GM13976 (cell line): ENCODE measurements at regions of chr10 and their contacts with region 1.

Region 1: DNA sequence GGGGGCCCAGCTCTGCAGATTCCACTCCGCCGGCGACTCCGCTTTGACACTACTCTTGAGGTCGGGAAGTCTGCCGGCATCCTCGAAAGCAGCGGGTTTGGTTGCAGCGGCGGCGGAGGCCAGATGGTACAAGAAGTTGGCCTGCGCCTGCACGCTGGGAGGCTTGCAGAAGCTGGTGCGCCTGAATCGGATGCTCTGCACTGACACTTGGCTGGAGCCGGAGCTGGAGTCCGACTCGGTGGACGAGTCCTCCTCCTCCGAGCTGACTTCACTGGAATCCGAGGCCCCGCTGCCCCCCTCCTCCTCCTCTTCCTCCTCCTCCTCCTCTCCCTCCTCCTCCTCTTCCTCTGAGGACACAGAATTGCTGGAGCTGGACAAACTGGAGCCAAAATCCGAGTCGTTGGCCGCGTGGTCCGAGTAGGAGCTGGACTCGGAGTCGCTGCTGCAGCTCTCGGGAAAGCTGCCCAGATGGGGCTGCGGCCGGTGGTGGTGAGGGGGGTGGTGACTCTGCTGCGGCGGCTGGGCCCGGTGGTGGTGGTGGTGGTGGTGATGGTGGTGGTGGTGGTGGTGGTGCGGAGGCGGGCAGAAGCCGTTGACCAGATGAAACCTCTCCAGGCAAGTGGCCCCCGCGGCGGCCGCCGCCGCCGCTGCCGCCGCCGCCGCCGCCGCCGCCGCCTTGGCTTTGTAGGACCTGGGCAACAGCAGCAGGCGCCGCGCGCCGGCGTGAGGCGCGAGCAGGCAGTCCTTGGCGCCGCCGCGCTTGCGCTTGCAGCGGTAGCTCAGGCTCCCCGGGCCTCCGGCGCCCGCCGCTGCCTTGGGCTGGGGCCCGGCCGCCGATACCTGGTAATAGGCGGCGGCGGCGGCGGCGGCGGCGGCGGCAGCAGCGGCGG is 9.0 kb downstream of the SKIDA1 start:
- DNase-seq: peak; percentile 75
- CTCF ChIP-seq: no peak

Region 2: DNA sequence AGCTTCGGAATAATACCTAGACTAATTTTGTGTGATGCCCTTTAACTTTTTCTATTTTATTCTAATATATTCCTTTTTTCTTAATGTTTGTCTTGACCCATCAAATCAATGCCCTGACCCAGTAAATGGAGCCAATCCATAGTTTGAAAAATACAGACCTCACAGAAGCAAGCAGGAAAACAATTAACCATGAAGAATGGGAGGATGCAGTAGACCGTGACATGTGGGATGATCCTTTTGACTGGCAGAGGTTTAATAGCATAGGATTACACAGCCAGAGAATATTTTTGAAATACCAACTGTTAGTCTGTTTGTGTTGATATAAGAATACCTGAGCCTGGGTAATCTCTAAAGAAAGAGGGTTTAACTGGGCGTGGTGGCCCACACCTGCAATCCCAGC is 476.8 kb before region 1 on chr10:
- in situ Hi-C with region 1: no loop called
- DNase-seq: no peak
- CTCF ChIP-seq: no peak

Region 3: DNA sequence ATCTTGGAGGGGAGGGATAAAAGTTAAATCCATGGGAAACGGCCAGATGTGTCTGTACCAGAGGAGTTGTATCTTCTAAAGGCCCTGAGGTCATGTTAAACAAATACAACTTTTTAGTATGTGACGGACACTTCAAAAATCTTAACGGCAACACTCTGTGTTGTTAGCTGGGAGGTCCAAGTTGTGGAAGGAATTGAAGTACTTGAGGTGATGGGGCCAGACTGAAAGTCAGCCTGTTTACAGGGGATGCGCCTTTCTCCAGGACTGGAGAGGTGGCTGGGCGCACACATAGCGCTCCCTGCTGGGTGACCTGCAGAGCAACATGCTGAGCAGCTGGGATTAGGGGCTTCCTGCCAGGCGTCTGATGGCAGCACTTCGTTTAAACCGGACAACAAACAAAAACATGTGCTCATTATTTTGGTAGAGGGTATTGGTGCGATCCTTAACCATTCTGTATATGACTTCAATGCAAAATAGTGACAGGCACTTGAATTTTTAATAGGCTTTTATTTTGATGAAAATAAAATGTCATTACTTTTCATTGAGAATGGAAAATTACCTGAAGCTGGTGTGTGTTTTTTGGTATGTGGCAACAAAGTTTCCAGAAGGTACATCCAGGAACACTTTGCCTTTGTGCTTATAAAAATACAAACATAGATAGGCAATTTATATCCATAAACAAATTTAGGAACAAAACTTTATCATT is 215.7 kb after region 1 on chr10:
- in situ Hi-C with region 1: no loop called
- DNase-seq: peak; percentile 69
- CTCF ChIP-seq: peak; percentile 83

Region 4: DNA sequence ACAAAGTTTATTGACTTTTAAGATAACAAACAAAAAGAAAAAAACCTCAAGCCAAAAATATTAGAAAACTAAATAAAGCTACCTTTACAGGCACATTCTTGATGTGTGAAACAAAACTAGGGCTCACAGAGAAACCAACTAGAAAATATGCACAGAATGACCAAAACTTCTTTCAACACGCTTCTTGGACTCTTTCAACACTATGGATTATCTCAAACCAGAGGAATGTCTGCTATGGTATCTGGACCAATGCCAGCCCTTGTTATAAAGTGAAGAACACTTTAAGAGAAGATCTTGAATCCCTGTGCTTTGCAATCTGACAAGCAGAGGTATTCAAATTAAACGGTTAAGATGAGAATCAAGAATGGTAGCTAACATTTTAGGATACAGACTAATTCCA is 410.5 kb after region 1 on chr10:
- in situ Hi-C with region 1: loop called (anchors 25 kb)
- DNase-seq: no peak
- CTCF ChIP-seq: no peak